K562 (cell line): ENCODE measurements at regions of chr22 and their contacts with region 1.

Region 1: GRCh38 chr22:22520020-22520656 is at the start of gene ZNF280A:
- DNase-seq: peak; percentile 98 to 99 (median 98)
- ATAC-seq: peak; percentile 82
- H3K4me3 ChIP-seq: peak within 1 kb of the TSS; percentile 41
- H3K27ac ChIP-seq: peak within 1 kb of the TSS; percentile 61
- H3K4me1 ChIP-seq: peaks cover 27 to 30% of the 10 kb centered on the region in 2 experiments
- H3K27me3 ChIP-seq: no peaks in the 10 kb centered on the region
- CTCF ChIP-seq: no peak
- EP300 ChIP-seq: no peak
- POLR2A ChIP-seq: no peak
- RAD21 ChIP-seq: no peak
- polyA plus RNA-seq, gene ZNF280A: 28.6 to 38.6 TPM

Region 2: DNA sequence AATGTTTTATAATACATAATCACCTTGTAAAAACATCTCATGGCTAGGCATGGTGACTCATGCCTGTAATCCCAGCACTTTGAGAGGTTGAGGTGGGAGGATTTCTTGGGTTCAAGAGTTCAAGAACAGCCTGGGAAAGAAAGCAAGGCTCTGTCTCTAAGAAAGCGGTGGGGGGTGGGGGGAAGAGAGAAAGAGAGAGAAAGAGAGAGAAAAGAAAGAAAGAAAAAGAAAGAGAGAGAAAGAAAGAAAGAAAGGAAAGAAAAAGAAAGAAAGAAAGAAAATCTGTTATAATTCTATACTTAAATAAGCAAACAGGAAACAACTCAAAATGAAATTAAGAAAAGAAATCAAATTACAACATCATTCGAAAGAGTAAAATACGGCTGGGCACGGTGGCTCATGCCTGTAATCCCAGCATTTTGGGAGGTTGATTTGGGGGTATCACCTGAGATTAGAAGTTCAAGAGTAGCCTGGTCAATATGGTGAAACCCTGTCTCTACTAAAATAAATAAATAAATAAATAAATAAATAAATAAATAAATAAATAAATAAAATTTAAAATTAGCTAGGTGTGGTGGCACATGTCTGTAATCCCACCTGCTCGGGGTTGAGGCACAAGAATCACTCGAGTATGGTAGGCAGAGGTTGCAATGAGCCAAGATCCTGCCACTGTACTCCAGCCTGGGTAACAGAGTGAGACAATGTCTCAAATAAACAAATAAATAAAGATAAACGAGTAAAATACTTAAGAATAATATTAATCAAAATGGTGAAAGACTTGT is 77.0 kb before region 1 on chr22:
- CTCF ChIA-PET with region 1: no interaction called
- POLR2A ChIA-PET with region 1: no interaction called
- in situ Hi-C with region 1: no loop called
- intact Hi-C with region 1: no loop called
- DNase-seq: no peak
- ATAC-seq: no peak
- H3K4me3 ChIP-seq: no peak overlapping the region
- H3K27ac ChIP-seq: no peak overlapping the region
- H3K4me1 ChIP-seq: no peaks in the 10 kb centered on the region
- H3K27me3 ChIP-seq: peaks cover 25 to 37% of the 10 kb centered on the region in 2 experiments
- CTCF ChIP-seq: no peak
- EP300 ChIP-seq: no peak
- POLR2A ChIP-seq: no peak
- RAD21 ChIP-seq: no peak

Region 3: DNA sequence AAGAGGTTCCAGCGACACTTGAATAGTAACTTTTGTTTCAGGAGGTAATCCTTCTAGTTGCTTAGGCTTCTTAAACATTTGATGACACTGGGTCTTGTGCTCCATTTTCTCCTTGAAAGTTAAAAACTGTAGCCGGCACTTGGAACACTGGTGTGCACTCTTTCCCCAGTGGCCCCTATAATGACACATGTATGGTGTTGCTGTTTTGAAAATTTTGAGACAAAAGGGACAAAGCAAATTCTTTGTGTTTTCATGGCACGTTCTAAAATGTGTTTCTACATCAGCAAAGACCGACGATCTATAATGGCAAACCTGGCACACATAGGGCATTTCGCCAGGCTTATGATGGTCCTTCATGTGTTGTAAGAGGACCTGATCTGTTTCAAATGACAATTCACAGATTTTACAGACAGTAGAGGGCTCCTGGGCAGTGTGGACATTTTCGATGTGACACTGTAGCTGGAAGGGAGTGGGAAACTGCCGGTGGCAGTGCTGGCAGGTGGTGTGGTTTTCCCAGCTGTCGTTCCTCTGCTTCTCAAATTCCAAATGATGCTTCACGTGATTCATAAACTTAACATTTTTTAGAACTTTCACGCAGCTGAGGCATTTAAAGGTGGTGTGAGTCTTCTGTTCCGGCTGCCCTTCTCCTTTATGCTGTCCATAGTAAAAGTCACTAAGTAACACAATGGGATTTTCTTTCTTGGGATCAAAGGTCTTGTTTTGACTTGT is 32.1 kb before region 1 on chr22:
- CTCF ChIA-PET with region 1: interaction called, 5 read pairs
- POLR2A ChIA-PET with region 1: interaction called, 34 read pairs
- in situ Hi-C with region 1: no loop called
- intact Hi-C with region 1: no loop called
- DNase-seq: peak in 1 of 4 experiments; percentile 39
- ATAC-seq: no peak
- H3K4me3 ChIP-seq: no peak overlapping the region
- H3K27ac ChIP-seq: no peak overlapping the region
- H3K4me1 ChIP-seq: no peaks in the 10 kb centered on the region
- H3K27me3 ChIP-seq: no peaks in the 10 kb centered on the region
- CTCF ChIP-seq: no peak
- EP300 ChIP-seq: no peak
- POLR2A ChIP-seq: no peak
- RAD21 ChIP-seq: no peak

Region 4: GRCh38 chr22:22508274-22509176 is 11.6 kb before region 1 on chr22 and contains the start of gene ZNF280B:
- CTCF ChIA-PET with region 1: interaction called, 5 read pairs
- POLR2A ChIA-PET with region 1: interaction called, 289 read pairs
- in situ Hi-C with region 1: no loop called
- intact Hi-C with region 1: loop called (anchors 1 kb)
- DNase-seq: peak; percentile 100
- ATAC-seq: peak; percentile 99
- H3K4me3 ChIP-seq: peak within 1 kb of the TSS; percentile 54
- H3K27ac ChIP-seq: peak within 1 kb of the TSS; percentile 63
- H3K4me1 ChIP-seq: peaks cover 12 to 13% of the 10 kb centered on the region in 2 experiments; a peak in 4 of 5 replicates
- H3K27me3 ChIP-seq: no peaks in the 10 kb centered on the region
- CTCF ChIP-seq: no peak
- EP300 ChIP-seq: no peak
- POLR2A ChIP-seq: no peak
- RAD21 ChIP-seq: no peak
- polyA plus RNA-seq, gene ZNF280B: 24.0 to 29.9 TPM

Region 5: DNA sequence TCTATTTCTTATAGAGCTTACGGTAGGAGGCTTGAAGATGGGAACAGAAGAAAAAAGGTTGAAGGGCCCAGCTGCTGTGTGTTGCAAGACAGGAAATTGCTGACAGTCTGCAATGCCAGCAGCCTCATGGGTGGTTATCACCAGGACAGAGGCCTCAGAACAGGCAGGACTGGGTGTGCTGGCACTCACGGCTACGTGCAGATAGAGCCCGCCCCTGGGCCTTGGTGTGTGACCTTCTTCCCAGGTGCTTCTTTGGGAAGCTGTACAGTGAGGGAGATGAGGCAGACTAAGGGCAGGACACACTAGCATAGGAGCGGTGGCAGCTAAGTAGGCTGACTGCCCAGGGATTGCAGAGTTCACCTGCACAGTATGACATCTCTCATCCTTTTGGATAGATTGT is 26.4 kb after region 1 on chr22:
- CTCF ChIA-PET with region 1: no interaction called
- POLR2A ChIA-PET with region 1: interaction called, 179 read pairs
- in situ Hi-C with region 1: no loop called
- intact Hi-C with region 1: no loop called
- DNase-seq: peak; percentile 56 to 72 (median 68)
- ATAC-seq: peak; percentile 44
- H3K4me3 ChIP-seq: no peak overlapping the region
- H3K27ac ChIP-seq: no peak overlapping the region; the same call in 2 of the 3 replicates
- H3K4me1 ChIP-seq: peaks cover 13 to 20% of the 10 kb centered on the region in 2 experiments
- H3K27me3 ChIP-seq: no peaks in the 10 kb centered on the region
- CTCF ChIP-seq: no peak
- EP300 ChIP-seq: no peak
- POLR2A ChIP-seq: no peak
- RAD21 ChIP-seq: no peak

Region 6: GRCh38 chr22:22558972-22559603 is 39.0 kb after region 1 on chr22 and contains the start of gene PRAME:
- CTCF ChIA-PET with region 1: interaction called, 16 read pairs
- POLR2A ChIA-PET with region 1: interaction called, 76 read pairs
- in situ Hi-C with region 1: no loop called
- intact Hi-C with region 1: loop called (anchors 1 kb)
- DNase-seq: peak; percentile 100
- ATAC-seq: peak; percentile 92
- H3K4me3 ChIP-seq: peak within 1 kb of the TSS; percentile 54
- H3K27ac ChIP-seq: peak within 1 kb of the TSS; percentile 78
- H3K4me1 ChIP-seq: peaks cover 39 to 43% of the 10 kb centered on the region in 2 experiments
- H3K27me3 ChIP-seq: no peaks in the 10 kb centered on the region; a peak in 1 of 5 replicates
- CTCF ChIP-seq: no peak
- EP300 ChIP-seq: no peak
- POLR2A ChIP-seq: no peak
- RAD21 ChIP-seq: no peak
- polyA plus RNA-seq, gene PRAME: 662 to 1,142 TPM

Region 7: DNA sequence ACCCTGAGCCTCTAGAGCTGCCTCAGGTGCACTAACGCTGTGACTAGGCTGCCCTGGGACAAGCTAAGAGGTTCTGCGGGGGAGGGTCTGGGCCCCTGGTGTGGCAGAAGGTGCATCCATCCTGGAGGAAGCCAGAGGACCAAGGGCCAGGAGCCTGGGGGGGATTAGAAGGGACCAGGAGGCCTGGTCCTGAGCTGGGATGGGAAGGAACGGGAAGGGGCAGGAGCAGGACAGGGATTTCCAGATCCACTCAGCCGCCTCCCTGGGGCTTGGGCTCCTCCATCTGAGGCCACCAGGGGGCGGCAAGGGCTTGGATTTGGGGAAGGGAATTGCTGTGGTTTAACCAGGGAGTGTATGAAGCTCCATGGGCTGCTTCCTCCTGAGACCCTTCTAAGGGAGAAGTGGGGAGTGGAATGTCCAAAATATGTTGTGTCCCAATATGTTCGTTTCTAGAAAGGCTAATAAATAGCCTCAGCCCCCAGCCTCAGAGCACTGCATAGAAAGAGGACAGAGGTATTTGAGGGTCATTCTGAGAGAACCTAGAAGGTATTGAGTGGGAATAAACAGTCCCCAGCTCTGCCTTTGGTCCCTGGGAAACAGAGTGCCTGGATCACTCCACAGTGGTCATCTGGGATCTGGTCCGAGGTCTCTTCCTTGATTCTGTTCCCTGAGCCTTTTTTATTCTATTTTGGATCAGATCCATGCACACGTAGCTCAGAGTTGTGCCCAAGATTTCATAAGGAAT is 56.3 kb after region 1 on chr22:
- CTCF ChIA-PET with region 1: no interaction called
- POLR2A ChIA-PET with region 1: interaction called, 11 read pairs
- in situ Hi-C with region 1: no loop called
- intact Hi-C with region 1: no loop called
- DNase-seq: peak; percentile 96 to 98 (median 97)
- ATAC-seq: peak; percentile 96
- H3K4me3 ChIP-seq: no peak overlapping the region
- H3K27ac ChIP-seq: no peak overlapping the region
- H3K4me1 ChIP-seq: peaks cover 0 to 14% of the 10 kb centered on the region in 2 experiments; a peak in 3 of 5 replicates
- H3K27me3 ChIP-seq: peaks cover 48 to 60% of the 10 kb centered on the region in 2 experiments
- CTCF ChIP-seq: peak in 1 of 3 experiments; percentile 99; a peak in 2 of 6 replicates
- EP300 ChIP-seq: peak; percentile 75
- POLR2A ChIP-seq: no peak
- RAD21 ChIP-seq: peak in 1 of 2 experiments; percentile 89; a peak in 2 of 4 replicates